ENCODE measurements at regions of chr12 and their contacts with region 1.

Region 1: DNA sequence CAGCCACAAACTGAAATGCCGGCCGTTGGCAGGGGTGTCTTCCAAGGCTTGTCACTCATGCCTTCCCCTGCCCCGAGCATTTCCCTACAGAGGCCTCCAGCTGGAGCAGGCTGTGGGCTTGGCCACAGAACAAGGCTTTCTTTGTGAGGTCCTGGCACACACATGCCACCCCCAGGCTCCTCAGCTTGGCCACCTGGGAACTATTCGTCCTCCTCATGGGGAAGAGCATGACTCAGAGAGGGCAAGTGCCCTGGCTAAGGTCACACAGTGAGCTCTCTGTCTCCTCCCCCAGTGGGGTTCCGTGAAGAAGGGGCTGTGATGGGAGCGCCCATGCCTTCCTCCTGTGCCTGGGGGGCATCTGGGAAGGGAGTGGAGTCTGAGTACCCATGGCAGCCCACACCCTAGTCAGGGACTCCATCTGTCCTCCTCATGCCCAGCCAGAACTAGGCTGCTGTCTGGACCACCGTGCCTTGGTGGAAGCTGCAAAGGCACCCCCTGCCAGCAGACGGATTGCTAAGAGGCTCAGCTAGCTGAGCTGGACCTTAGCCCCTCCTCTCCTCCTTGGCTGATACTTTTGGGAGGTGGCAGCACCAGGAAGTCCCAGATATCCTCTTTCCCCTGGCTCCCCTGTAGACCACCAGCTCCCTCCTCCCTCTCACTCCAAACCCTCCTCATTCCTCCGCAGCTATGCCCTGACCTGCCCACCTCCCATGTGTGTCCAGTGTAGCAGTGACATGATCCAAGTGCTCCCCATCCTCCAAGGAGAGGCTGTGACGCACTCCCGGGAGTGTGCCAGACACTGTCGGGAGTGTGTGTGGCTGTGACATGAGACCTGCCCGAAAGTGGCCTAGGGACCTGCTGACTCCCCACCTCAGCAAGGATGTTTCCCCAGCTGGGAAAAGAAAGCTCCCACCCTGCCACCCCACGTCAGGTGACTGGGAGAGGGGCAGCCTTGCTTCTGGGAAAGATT is 21.4 kb downstream of the ABCB9 start:
- DNase-seq: no peak
- ATAC-seq: no peak
- H3K4me3 ChIP-seq: no peak overlapping the region
- H3K4me3 Mint-ChIP-seq: no peak overlapping the region
- H3K27ac ChIP-seq: no peak overlapping the region
- H3K27ac Mint-ChIP-seq: no peak overlapping the region
- H3K4me1 ChIP-seq: peaks cover 19% of the 10 kb centered on the region
- H3K4me1 Mint-ChIP-seq: peaks cover 10% of the 10 kb centered on the region
- H3K27me3 ChIP-seq: no peaks in the 10 kb centered on the region
- H3K27me3 Mint-ChIP-seq: no peaks in the 10 kb centered on the region
- CTCF ChIP-seq: no peak

Region 2: GRCh38 chr12:122909442-122910288 is 35.2 kb before region 1 on chr12:
- CTCF ChIA-PET with region 1: no interaction called
- POLR2A ChIA-PET with region 1: no interaction called
- intact Hi-C with region 1: loop called in 1 of 2 experiments (anchors 1 kb)
- DNase-seq: no peak
- ATAC-seq: no peak
- H3K4me3 ChIP-seq: no peak overlapping the region
- H3K4me3 Mint-ChIP-seq: no peak overlapping the region
- H3K27ac ChIP-seq: no peak overlapping the region
- H3K27ac Mint-ChIP-seq: no peak overlapping the region
- H3K4me1 ChIP-seq: no peaks in the 10 kb centered on the region
- H3K4me1 Mint-ChIP-seq: peaks cover 2% of the 10 kb centered on the region
- H3K27me3 ChIP-seq: no peaks in the 10 kb centered on the region
- H3K27me3 Mint-ChIP-seq: no peaks in the 10 kb centered on the region
- CTCF ChIP-seq: no peak

Measured in CD8-positive, alpha-beta T cell (primary cell).